GM10248 (cell line): ENCODE measurements at regions of chr14 and their contacts with region 1.

Region 1: GRCh38 chr14:24710403-24711112 is 76.6 kb upstream of the GZMB start:
- DNase-seq: peak; percentile 62
- CTCF ChIP-seq: peak; percentile 89

Region 2: GRCh38 chr14:24673534-24674203 is 36.9 kb before region 1 on chr14:
- CTCF ChIA-PET with region 1: interaction called, 25 read pairs
- POLR2A ChIA-PET with region 1: no interaction called
- DNase-seq: peak; percentile 17
- CTCF ChIP-seq: no peak

Region 3: GRCh38 chr14:24690492-24690891 is 20.1 kb before region 1 on chr14:
- CTCF ChIA-PET with region 1: interaction called, 12 read pairs
- POLR2A ChIA-PET with region 1: no interaction called
- DNase-seq: no peak
- CTCF ChIP-seq: no peak

Region 4: DNA sequence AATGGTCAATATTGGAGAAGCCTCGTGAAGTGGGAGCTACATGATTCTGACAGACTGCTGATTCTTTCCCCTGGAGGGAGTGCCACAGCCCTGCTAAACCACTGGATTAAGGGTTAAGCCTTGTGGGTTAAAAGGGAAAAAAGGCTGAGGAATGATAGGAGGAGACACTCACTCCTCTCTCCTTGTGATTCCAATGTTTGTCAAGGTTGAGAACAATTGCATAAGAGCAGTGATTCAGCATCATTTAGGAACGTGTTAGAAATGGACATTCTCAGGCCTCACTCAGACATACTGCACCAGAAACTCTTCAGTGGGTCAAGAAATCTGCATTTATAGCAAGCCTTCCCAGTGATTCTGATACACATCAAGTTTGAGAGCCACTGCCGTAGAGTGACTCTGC is 11.2 kb after region 1 on chr14:
- CTCF ChIA-PET with region 1: interaction called, 33 read pairs
- POLR2A ChIA-PET with region 1: no interaction called
- DNase-seq: no peak
- CTCF ChIP-seq: no peak

Region 5: DNA sequence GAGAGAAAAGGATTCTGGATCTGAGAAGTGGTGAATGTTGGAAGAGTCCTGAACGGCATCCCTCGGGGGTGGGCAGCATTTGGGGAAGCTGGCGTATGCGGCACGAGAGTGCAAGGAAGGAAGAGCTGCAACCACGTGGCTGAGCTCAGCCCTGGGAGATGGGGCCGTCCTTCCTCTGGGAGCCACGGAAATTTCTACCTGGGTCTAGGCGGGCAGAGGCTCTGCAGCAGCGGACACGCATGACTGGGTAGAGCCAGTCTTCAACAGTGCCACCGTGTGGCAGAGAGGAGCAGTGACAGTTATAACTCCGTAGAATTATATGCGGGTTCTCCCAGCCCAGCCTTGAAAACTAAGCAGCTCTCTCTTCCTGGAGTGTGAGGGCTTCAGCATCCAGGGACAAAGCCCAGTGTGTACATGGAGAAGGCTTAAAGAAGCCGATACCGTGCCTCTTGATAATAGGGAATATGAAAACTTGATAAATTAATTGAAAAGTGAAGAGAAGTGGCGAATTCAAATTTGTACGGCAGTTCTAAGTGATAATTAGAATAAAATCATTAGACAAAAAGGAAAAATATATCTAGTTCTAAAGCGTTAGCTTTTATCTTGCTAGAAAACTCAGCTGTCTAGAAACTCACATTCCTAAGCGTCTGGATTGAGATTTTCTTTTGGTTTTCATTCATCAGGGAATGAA is 422.3 kb after region 1 on chr14:
- CTCF ChIA-PET with region 1: interaction called, 57 read pairs
- POLR2A ChIA-PET with region 1: no interaction called
- DNase-seq: peak; percentile 72
- CTCF ChIP-seq: peak; percentile 66